T-cell (primary cell): ENCODE measurements at regions of chr12 and their contacts with region 1.

Region 1: DNA sequence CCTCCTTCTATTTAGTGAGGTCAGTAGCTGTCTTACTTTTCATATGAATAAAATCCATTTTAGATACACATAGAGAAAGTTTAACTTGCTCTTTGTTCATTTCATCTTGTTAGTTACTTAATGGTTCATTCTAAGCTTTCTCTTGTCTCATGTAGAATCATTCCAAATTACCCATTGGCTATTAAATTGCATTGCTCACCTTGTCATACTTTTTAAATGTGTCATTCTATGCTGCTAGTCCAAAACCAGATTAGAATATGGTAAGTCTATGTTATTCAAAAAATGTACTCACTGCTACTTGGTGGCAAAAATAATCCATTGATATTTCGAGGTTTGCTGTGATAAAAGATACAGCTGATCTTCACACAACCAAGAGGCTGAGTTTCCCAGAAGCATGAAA is 3.0 kb downstream of the C12orf50 start:
- DNase-seq: no peak
- ATAC-seq: no peak
- H3K4me3 ChIP-seq: no peak overlapping the region
- H3K4me3 Mint-ChIP-seq: no peak overlapping the region
- H3K27ac ChIP-seq: no peak overlapping the region
- H3K27ac Mint-ChIP-seq: no peak overlapping the region
- H3K4me1 ChIP-seq: no peaks in the 10 kb centered on the region
- H3K4me1 Mint-ChIP-seq: no peaks in the 10 kb centered on the region
- H3K27me3 ChIP-seq: no peaks in the 10 kb centered on the region
- H3K27me3 Mint-ChIP-seq: peaks cover 3 to 6% of the 10 kb centered on the region in 2 donors

Region 2: GRCh38 chr12:87756111-87756510 is 270.1 kb before region 1 on chr12:
- CTCF ChIA-PET with region 1: no interaction called
- POLR2A ChIA-PET with region 1: no interaction called
- DNase-seq: no peak
- ATAC-seq: no peak
- H3K4me3 ChIP-seq: no peak overlapping the region
- H3K4me3 Mint-ChIP-seq: no peak overlapping the region
- H3K27ac ChIP-seq: no peak overlapping the region
- H3K27ac Mint-ChIP-seq: no peak overlapping the region
- H3K4me1 ChIP-seq: no peaks in the 10 kb centered on the region
- H3K4me1 Mint-ChIP-seq: no peaks in the 10 kb centered on the region
- H3K27me3 ChIP-seq: no peaks in the 10 kb centered on the region
- H3K27me3 Mint-ChIP-seq: no peaks in the 10 kb centered on the region

Region 3: GRCh38 chr12:87953256-87953860 is 72.8 kb before region 1 on chr12:
- CTCF ChIA-PET with region 1: no interaction called
- POLR2A ChIA-PET with region 1: interaction called in 1 of 2 experiments, 14 read pairs
- DNase-seq: no peak
- ATAC-seq: no peak
- H3K4me3 ChIP-seq: no peak overlapping the region
- H3K4me3 Mint-ChIP-seq: no peak overlapping the region
- H3K27ac ChIP-seq: no peak overlapping the region
- H3K27ac Mint-ChIP-seq: no peak overlapping the region
- H3K4me1 ChIP-seq: no peaks in the 10 kb centered on the region
- H3K4me1 Mint-ChIP-seq: no peaks in the 10 kb centered on the region
- H3K27me3 ChIP-seq: no peaks in the 10 kb centered on the region
- H3K27me3 Mint-ChIP-seq: no peaks in the 10 kb centered on the region